Endothelial cell of umbilical vein (primary cell): ENCODE measurements at regions of chr5 and their contacts with region 1.

Region 1: DNA sequence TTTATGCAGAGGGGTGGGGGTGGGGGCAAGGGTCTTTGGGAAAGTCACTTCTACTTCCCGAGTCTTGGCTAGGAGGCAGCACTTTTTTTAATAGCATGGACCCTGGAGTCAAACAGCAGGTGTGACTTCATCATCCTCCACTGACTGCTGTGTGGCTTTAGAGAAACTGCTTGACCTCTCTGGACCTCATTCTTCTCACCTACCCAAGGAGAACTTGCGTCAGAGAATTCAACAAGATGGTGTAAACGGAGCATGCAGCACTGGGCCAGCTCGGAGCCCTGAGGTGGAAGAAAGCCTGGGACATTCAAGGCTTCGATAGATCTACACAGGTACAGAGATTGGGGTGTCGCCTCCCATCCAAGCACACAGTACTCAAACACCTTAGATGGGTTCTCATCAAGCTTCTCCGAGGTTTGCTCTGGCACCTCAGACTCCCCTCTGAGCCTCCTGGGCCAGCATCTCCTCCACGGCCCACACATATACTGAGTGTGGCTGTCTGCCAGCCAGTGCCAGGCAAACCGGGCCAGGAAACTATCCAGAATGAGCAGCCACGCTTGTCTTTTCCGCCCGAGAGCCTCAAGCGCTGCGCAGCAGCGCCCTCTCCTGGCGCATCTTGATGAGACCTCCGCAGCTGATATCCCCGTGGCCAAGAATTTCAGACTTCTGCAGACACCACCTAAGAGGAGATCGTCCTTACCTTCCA is 4.6 kb upstream of the SLC25A48 start:
- DNase-seq: peak; percentile 40
- H3K4me3 ChIP-seq: no peak overlapping the region
- H3K27ac ChIP-seq: no peak overlapping the region
- H3K4me1 ChIP-seq: no peaks in the 10 kb centered on the region
- H3K27me3 ChIP-seq: peaks cover 1 to 4% of the 10 kb centered on the region in 2 experiments
- CTCF ChIP-seq: peak; percentile 81 to 85
- POLR2A ChIP-seq: no peak

Region 2: DNA sequence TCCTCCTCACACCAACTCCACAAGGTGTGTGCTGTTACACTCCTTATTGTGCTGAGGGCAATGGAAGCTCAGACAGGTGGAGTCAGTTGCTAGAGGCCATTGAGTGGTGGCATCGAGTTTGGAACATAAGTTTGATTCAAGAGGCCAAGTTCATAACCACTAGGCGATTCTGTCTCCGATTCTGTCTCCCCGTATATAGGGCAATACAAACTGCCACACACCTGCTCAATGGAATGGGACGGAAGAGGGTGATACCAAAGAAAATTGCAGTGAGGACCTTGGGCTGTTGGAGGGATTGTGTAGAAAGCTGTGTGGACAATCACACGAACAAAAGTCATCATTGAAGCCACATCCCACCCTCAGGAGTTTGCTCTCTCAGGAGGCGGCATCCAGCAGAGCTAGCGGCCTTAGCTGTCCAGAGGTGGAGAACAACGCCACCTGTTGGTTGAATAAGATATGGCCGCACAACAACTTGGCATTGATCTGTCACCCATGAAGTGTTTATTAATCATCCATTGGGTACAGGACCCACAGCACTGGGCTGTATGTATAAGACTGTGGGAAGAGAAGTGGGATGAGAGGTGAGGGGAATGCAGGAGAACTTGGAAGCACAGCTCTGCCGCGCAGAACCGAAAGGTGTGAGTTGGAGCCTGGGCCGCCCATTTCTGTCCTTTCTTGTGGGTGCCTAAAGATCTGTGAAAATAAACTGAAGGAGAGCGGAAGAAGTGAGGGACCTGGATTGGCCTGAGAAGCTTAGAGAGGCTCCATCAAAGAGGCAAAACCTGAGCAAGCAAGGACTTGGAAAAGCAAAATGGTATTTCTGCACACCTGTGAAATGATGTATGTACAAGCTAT is 278.0 kb before region 1 on chr5:
- CTCF ChIA-PET with region 1: interaction called, 10 read pairs
- POLR2A ChIA-PET with region 1: no interaction called
- dilution Hi-C with region 1: no loop called
- intact Hi-C with region 1: no loop called
- DNase-seq: peak; percentile 71
- H3K4me3 ChIP-seq: no peak overlapping the region
- H3K27ac ChIP-seq: no peak overlapping the region
- H3K4me1 ChIP-seq: no peaks in the 10 kb centered on the region
- H3K27me3 ChIP-seq: peaks cover 34 to 46% of the 10 kb centered on the region in 2 experiments
- CTCF ChIP-seq: peak; percentile 74 to 83
- POLR2A ChIP-seq: no peak

Region 3: GRCh38 chr5:135565725-135566421 is 264.0 kb before region 1 on chr5:
- CTCF ChIA-PET with region 1: interaction called, 120 read pairs
- POLR2A ChIA-PET with region 1: no interaction called
- dilution Hi-C with region 1: no loop called
- intact Hi-C with region 1: loop called (anchors 1 kb)
- DNase-seq: peak; percentile 54
- H3K4me3 ChIP-seq: no peak overlapping the region
- H3K27ac ChIP-seq: no peak overlapping the region
- H3K4me1 ChIP-seq: no peaks in the 10 kb centered on the region
- H3K27me3 ChIP-seq: peaks cover 8 to 10% of the 10 kb centered on the region in 2 experiments
- CTCF ChIP-seq: peak; percentile 90 to 93
- POLR2A ChIP-seq: no peak

Region 4: GRCh38 chr5:135729321-135729786 is 100.5 kb before region 1 on chr5:
- CTCF ChIA-PET with region 1: no interaction called
- POLR2A ChIA-PET with region 1: no interaction called
- dilution Hi-C with region 1: loop called (anchors 25 kb)
- intact Hi-C with region 1: no loop called
- DNase-seq: no peak
- H3K4me3 ChIP-seq: no peak overlapping the region
- H3K27ac ChIP-seq: no peak overlapping the region
- H3K4me1 ChIP-seq: no peaks in the 10 kb centered on the region
- H3K27me3 ChIP-seq: peaks cover 0 to 2% of the 10 kb centered on the region in 2 experiments
- CTCF ChIP-seq: no peak
- POLR2A ChIP-seq: no peak

Region 5: GRCh38 chr5:136006761-136007251 is 177.0 kb after region 1 on chr5:
- CTCF ChIA-PET with region 1: no interaction called
- POLR2A ChIA-PET with region 1: no interaction called
- dilution Hi-C with region 1: no loop called
- intact Hi-C with region 1: no loop called
- DNase-seq: no peak
- H3K4me3 ChIP-seq: no peak overlapping the region
- H3K27ac ChIP-seq: no peak overlapping the region
- H3K4me1 ChIP-seq: peaks cover 11% of the 10 kb centered on the region
- H3K27me3 ChIP-seq: no peaks in the 10 kb centered on the region
- CTCF ChIP-seq: no peak
- POLR2A ChIP-seq: no peak